ENCODE measurements at regions of chr6 and their contacts with region 1.

Region 1: DNA sequence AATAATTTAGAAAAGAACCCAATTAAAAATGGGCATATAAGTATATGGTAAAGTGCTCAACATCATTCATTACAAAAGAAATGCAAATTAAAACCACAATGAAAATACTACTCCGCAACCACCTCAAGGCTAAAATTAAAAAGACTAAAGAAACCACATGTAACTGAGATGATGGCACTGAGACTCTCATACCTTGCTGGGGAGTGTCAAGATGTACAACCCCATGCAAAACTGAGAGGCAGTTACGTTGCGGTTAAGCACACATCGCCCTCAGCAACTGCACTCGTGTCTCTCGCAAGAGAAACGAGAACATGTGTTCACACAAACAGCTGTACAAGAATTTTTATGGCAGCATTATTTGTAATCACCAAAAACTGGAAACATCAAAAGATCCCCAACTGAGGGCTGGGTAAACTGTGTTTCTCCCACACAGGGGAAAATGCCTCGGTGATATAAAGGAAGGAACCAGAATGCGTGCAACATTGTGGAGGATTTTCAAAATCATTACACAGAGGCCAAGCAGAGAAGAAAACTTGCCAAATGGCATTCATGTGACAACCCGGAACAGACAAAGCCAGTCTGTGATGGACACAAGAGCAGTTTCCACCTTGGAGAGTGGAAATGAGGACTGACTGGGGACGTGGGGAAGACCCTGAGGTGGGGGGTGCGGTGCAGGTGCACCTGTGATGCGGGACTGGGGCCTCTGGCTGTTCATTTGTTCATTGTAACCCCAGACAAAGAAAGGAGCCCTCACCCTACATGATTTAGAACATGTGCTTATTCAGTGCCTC is 144.9 kb downstream of the WDR27 start:
- DNase-seq: peak; percentile 13
- H3K4me3 Mint-ChIP-seq: peak overlapping the region; percentile 4
- H3K27ac Mint-ChIP-seq: peak overlapping the region; percentile 34
- H3K4me1 Mint-ChIP-seq: peaks cover 15% of the 10 kb centered on the region
- H3K27me3 Mint-ChIP-seq: peaks cover 20% of the 10 kb centered on the region

Region 2: DNA sequence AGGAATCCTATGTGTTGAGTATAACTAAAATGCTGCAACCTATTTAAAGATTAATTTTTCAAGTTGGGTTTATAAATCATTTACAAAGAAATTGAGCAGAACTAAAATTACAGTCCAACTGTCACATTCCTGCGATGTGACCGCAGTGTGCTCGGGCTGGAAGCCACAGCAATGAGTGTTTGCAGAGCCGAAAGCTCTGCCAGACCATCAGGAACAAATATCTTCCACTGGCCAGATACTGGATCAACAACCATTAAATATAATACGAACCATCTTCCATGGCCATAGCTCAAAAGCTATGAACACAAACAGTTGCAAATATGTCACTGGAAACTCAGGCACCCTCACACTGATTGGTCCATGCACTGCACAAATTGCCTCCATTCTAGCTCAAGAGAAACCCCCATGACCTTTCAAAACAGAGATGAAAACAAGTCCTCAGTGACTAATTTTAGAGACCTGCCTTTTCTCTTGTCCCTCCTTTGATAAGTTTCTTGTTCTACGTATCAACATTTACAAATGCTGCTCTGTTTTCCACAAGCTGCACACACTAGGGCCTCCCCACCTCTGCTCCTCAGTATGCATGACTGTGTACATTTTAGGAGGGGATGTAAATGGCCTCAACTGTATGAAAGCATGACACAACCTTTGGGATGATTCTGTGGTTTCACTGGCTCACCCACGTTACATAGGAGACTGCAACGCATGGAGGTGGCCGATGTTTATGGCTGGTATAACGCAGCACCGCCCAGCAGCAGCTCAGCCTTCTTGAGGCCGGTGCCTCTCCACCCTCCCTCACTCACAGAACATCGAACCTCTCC is 26.8 kb before region 1 on chr6:
- intact Hi-C with region 1: loop called (anchors 1 kb)
- DNase-seq: peak; percentile 2
- H3K4me3 Mint-ChIP-seq: peak overlapping the region; percentile 20
- H3K27ac Mint-ChIP-seq: peak overlapping the region; percentile 55
- H3K4me1 Mint-ChIP-seq: peaks cover 16% of the 10 kb centered on the region
- H3K27me3 Mint-ChIP-seq: peaks cover 2% of the 10 kb centered on the region

Region 3: GRCh38 chr6:169589293-169589692 is 32.3 kb after region 1 on chr6:
- intact Hi-C with region 1: loop called (anchors 1 kb)
- DNase-seq: peak; percentile 25
- H3K4me3 Mint-ChIP-seq: no peak overlapping the region
- H3K27ac Mint-ChIP-seq: peak overlapping the region; percentile 56
- H3K4me1 Mint-ChIP-seq: peaks cover 22% of the 10 kb centered on the region
- H3K27me3 Mint-ChIP-seq: peaks cover 5% of the 10 kb centered on the region

Measured in activated T-helper 1 cell treated with anti-CD3 and anti-CD28 coated beads, Interleukin-12 subunit alpha, Interleukin-12 subunit beta, Interleukin-2, Interleukin-4 antibody, amounts not matched to agents 30 ng/mL and 10 ng/mL and 1 ng/mL, durations not matched to agents 14 hours and 24 hours and 36 hours (primary cell).